Panc1 (cell line): ENCODE measurements at regions of chr12 and their contacts with region 1.

Region 1: GRCh38 chr12:12724661-12725545 is 7.7 kb downstream of the CDKN1B start:
- DNase-seq: peak; percentile 92
- ATAC-seq: peak; percentile 70
- H3K4me3 ChIP-seq: peak overlapping the region; percentile 64 to 68
- H3K27ac ChIP-seq: peak overlapping the region; percentile 96
- H3K4me1 ChIP-seq: peaks cover 43% of the 10 kb centered on the region
- H3K27me3 ChIP-seq: no peaks in the 10 kb centered on the region
- CTCF ChIP-seq: no peak

Region 2: DNA sequence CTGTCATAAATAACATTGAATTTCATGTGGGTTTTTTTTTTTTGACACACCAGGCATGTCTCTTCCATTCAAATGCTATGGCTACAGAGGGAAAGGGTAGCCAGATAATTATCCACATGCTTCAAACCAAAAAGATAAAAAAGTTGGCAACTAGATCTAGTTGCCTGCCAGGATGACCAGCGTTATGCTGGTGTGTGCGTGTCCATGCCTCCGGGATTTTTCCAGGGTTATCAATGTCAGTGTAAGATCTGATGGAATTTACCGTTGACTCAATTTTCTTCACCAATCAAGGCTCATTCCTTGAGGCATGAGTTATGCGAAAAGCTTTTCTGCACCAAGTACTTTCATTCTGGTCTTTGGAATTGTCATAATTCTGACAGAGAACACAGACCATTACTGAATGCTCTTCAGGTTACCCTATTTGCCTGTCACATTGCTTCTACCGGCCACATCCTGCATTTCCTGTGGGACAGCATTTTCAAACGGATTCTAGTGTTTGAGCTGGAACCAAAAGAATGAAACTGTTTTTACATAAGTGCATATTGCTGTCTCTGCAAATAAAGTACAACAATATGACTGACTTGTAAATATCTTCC is 254.2 kb before region 1 on chr12:
- CTCF ChIA-PET with region 1: no interaction called
- POLR2A ChIA-PET with region 1: interaction called, 12 read pairs
- in situ Hi-C with region 1: no loop called
- intact Hi-C with region 1: no loop called
- DNase-seq: no peak
- ATAC-seq: no peak
- H3K4me3 ChIP-seq: no peak overlapping the region
- H3K27ac ChIP-seq: no peak overlapping the region
- H3K4me1 ChIP-seq: no peaks in the 10 kb centered on the region
- H3K27me3 ChIP-seq: no peaks in the 10 kb centered on the region
- CTCF ChIP-seq: no peak

Region 3: DNA sequence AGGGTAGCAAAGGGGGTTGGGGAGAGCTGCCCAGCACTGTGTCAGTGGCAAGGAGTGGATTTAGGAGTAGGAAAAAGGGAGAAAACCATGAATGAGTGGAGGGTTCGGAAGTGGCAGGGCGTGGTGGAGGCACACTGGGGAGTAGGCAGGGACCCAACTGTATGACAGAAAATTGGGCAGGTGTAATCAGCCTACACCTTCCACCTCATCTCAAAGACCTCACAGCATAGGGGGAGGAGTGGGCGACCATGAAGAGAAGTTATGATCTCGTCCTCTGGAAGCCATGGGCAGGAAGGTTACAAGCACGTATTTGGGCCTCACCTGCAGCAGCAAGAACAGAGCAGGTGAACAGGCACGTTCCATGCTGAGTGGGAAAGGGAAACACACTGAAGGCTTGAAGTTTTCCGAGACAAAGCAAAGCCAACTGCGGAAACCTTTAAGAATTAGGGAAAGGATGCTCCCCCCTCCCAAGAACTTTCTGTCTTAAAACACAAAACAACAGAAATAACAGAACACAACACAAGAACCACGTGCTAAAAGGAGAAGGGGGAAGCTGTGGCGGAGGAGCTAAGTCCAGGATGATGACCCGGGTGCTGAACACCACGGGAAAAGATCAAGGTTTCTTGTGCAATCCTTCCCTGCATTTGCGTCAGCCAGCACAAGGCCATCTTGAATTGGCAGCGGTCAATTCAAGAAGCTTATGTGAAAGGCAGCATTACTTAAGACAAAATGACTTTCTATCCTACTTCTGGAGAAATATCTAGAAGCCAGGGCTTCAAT is 124.5 kb before region 1 on chr12:
- CTCF ChIA-PET with region 1: no interaction called
- POLR2A ChIA-PET with region 1: no interaction called
- in situ Hi-C with region 1: no loop called
- intact Hi-C with region 1: no loop called
- DNase-seq: no peak
- ATAC-seq: no peak
- H3K4me3 ChIP-seq: no peak overlapping the region
- H3K27ac ChIP-seq: no peak overlapping the region
- H3K4me1 ChIP-seq: no peaks in the 10 kb centered on the region
- H3K27me3 ChIP-seq: no peaks in the 10 kb centered on the region
- CTCF ChIP-seq: no peak

Region 4: GRCh38 chr12:12673296-12673695 is 51.6 kb before region 1 on chr12:
- CTCF ChIA-PET with region 1: no interaction called
- POLR2A ChIA-PET with region 1: no interaction called
- in situ Hi-C with region 1: no loop called
- intact Hi-C with region 1: no loop called
- DNase-seq: no peak
- ATAC-seq: no peak
- H3K4me3 ChIP-seq: no peak overlapping the region
- H3K27ac ChIP-seq: no peak overlapping the region
- H3K4me1 ChIP-seq: peaks cover 3% of the 10 kb centered on the region
- H3K27me3 ChIP-seq: no peaks in the 10 kb centered on the region
- CTCF ChIP-seq: no peak

Region 5: GRCh38 chr12:12786716-12787601 is 62.1 kb after region 1 on chr12:
- CTCF ChIA-PET with region 1: no interaction called
- POLR2A ChIA-PET with region 1: interaction called, 16 read pairs
- in situ Hi-C with region 1: no loop called
- intact Hi-C with region 1: no loop called
- DNase-seq: no peak
- ATAC-seq: peak; percentile 89
- H3K4me3 ChIP-seq: peak overlapping the region; percentile 45 to 61
- H3K27ac ChIP-seq: peak overlapping the region; percentile 92
- H3K4me1 ChIP-seq: peaks cover 70% of the 10 kb centered on the region
- H3K27me3 ChIP-seq: no peaks in the 10 kb centered on the region
- CTCF ChIP-seq: no peak

Region 6: DNA sequence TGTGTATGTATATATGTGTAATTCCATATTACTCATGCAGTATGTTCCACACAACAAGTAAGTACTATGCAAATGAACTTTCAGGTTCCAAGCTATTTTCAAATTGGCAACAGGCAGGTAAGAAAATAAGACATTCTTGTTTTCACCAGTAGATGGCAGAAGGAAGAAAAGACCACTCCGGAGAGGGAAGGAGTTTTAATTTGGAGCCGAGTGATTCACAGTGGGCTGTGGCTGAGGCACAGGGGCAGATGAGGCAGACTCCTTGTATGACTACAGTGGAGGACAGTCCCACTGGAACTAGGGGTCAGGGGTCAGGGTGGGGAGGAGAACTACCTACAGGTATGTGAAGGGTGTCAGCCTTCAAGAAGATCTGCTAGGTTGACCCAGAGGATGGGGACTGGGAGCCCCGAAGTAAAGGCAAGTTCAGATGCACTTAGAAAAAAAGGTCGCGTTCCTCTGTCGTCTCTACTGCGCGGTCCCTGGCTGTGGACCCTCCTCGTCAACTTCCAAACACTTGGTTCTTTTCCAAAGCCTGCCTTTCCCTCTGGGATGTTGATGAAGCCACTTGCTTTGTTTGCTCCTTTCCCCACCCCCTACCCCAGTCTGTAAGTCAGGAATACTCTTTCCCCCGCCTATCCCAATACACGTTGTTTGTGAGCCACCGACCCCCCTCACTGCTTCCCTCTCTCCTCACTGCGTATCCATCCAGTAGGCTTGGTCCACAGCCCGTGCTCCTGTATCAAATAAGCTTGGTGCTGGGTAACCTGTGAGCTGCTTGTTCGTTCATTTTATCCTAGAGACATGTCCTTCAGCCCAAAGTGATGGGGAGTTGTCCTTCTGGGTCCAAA is 112.3 kb after region 1 on chr12:
- CTCF ChIA-PET with region 1: no interaction called
- POLR2A ChIA-PET with region 1: no interaction called
- in situ Hi-C with region 1: no loop called
- intact Hi-C with region 1: no loop called
- DNase-seq: peak; percentile 71
- ATAC-seq: peak; percentile 53
- H3K4me3 ChIP-seq: no peak overlapping the region
- H3K27ac ChIP-seq: peak overlapping the region; percentile 93
- H3K4me1 ChIP-seq: peaks cover 62% of the 10 kb centered on the region
- H3K27me3 ChIP-seq: no peaks in the 10 kb centered on the region
- CTCF ChIP-seq: peak; percentile 70; the same call in 1 of the 2 replicates

Region 7: DNA sequence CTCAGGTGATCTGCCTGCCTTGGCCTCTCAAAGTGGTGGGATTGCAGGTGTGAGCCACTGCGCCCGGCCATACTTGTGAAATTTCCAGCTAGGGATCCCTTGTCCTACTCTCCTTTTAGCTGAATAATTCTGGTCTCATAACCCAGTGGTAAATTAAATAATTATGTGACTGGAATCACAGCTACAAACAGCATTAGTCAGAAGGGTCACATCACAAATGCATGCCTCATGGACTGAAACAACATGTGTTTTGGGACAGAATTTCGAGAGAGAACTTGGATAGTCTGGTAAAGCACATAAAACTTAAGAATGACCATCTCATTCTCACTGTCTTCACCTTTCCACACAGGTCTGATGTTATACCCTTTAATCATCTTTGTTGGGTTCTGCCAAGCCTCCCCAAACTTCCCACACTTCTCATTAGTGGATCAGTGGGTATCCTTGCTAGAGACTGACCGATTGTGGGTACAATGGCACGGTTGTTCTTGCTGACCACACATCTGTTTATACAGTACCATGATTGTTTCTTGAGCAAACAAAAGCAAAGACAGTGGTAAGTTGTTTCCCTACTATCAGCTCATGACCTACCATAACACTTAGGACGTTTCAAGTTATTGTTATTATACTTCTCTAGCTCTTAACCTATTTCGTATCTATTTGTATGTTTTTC is 221.9 kb after region 1 on chr12:
- CTCF ChIA-PET with region 1: no interaction called
- POLR2A ChIA-PET with region 1: no interaction called
- in situ Hi-C with region 1: no loop called
- intact Hi-C with region 1: no loop called
- DNase-seq: no peak
- ATAC-seq: peak; percentile 89
- H3K4me3 ChIP-seq: no peak overlapping the region
- H3K27ac ChIP-seq: no peak overlapping the region
- H3K4me1 ChIP-seq: peaks cover 4% of the 10 kb centered on the region; the same call in 1 of the 2 replicates
- H3K27me3 ChIP-seq: no peaks in the 10 kb centered on the region
- CTCF ChIP-seq: no peak